Activated T-helper 2 cell treated with anti-CD3 and anti-CD28 coated beads, Interferon-gamma antibody, Interleukin-2, Interleukin-4, amounts not matched to agents 10 μg/mL and 5 μg/mL and 100 μg/mL, durations not matched to agents 14 hours and 24 hours and 36 hours (primary cell): ENCODE measurements at regions of chr10 and their contacts with region 1.

Region 1: GRCh38 chr10:2949948-2950354 is 117.4 kb upstream of the PFKP start:
- DNase-seq: no peak
- H3K4me3 Mint-ChIP-seq: no peak overlapping the region
- H3K27ac Mint-ChIP-seq: no peak overlapping the region
- H3K4me1 Mint-ChIP-seq: peaks cover 37% of the 10 kb centered on the region
- H3K27me3 Mint-ChIP-seq: peaks cover 18% of the 10 kb centered on the region

Region 2: DNA sequence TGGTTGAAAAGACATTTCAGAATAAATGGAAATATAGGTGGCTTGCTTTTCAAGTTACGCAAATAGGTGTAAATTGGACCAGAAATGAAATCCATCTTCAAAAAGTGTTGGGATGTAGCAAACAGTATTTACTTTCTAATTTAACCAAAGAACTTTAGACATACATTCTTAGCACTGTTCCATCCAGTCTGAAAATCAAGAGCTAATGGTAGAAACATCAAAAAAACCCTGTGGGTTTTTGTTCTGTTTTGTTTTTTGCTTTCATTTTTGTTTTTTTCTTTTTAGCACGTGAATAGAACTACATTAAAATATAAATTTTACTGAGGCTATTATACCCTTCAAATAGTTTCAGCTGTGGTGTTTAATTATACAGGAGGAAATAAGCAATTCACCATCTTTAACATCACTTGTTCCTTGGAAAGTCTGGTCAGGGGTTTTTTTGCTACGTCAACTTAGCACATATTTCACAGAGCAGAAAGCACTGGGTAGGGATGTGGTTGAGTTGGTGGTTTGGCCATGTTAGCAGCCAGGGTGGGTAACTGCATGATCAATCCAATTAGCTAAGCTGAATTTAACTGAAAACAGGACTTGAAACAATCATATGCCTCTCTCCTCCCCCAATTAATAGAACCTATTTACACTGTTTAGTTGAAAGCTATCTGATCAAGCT is 158.0 kb before region 1 on chr10:
- intact Hi-C with region 1: loop called (anchors 5 kb)
- DNase-seq: peak; percentile 22
- H3K4me3 Mint-ChIP-seq: no peak overlapping the region
- H3K27ac Mint-ChIP-seq: peak overlapping the region; percentile 33
- H3K4me1 Mint-ChIP-seq: peaks cover 27% of the 10 kb centered on the region
- H3K27me3 Mint-ChIP-seq: peaks cover 15% of the 10 kb centered on the region

Region 3: GRCh38 chr10:2897619-2898508 is 52.1 kb before region 1 on chr10:
- intact Hi-C with region 1: loop called (anchors 1 kb)
- DNase-seq: no peak
- H3K4me3 Mint-ChIP-seq: no peak overlapping the region
- H3K27ac Mint-ChIP-seq: no peak overlapping the region
- H3K4me1 Mint-ChIP-seq: peaks cover 14% of the 10 kb centered on the region
- H3K27me3 Mint-ChIP-seq: peaks cover 18% of the 10 kb centered on the region

Region 4: DNA sequence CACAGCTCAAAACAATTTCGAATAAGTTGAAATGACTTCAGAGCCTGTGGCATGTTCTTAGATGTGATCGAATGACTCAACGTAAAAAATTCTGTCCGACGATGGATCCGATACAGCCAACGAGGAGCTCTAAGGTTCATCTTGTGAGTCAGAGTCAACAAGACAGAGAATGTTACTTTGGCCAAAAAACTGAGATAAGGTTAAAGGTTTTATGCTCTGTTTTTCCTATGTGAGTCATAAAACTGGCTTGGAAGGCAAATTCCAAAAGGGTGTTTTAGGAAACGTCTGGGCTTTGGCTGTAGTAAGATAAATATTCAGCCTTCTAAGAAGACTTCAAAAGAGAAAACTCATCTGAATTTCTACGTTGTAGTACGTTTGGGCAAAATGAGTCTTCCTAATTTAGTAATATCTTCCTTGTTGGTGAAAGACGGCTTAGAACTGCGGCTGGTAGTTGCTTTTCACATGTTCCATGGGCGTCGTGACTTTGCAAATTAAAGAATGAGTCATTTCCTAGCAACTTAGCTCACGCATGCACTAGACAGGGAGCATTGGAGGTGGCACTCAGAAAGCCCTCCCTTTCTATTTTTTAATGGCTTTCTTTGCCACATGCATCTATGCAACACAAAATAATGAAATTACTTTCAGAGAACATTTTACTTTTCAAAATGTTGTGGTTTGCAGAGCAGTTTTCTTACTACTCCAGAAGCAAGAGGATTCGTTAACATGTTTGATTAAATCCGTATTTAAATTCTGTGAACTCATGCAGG is 145.6 kb after region 1 on chr10:
- intact Hi-C with region 1: loop called (anchors 10 kb)
- DNase-seq: peak; percentile 52
- H3K4me3 Mint-ChIP-seq: peak overlapping the region; percentile 31
- H3K27ac Mint-ChIP-seq: peak overlapping the region; percentile 94
- H3K4me1 Mint-ChIP-seq: peaks cover 59% of the 10 kb centered on the region
- H3K27me3 Mint-ChIP-seq: no peaks in the 10 kb centered on the region

Region 5: GRCh38 chr10:3791974-3792633 is 842.2 kb after region 1 on chr10:
- intact Hi-C with region 1: no loop called
- DNase-seq: no peak
- H3K4me3 Mint-ChIP-seq: no peak overlapping the region
- H3K27ac Mint-ChIP-seq: peak overlapping the region; percentile 2
- H3K4me1 Mint-ChIP-seq: peaks cover 27% of the 10 kb centered on the region
- H3K27me3 Mint-ChIP-seq: no peaks in the 10 kb centered on the region